PC-3 (cell line): ENCODE measurements at regions of chr4 and their contacts with region 1.

Region 1: DNA sequence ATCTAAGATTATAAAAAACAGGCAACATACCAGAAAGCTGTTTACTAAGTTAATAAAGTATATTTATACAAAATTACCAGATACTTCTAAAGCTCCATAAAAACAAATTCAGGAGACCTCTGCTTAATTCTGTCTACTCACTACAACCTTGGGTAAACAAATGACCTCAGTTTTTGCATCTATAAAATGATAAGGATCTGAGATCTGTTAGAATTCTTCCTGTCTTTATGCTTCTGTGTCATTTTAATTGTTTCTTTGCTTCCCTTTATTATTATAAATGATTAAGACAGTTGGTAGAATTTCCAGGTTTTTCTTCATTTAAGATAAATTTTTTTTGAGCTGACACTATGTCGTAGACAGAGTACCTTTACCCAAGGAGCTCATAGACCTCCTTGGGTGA is 76.0 kb downstream of the ANK2 start:
- DNase-seq: peak; percentile 10
- ATAC-seq: peak; percentile 78
- H3K4me3 ChIP-seq: no peak overlapping the region
- H3K27ac ChIP-seq: no peak overlapping the region
- H3K4me1 ChIP-seq: 0 out of 2 replicates have a peak, but pooled peaks cover 4% of the 10 kb centered on the region
- H3K27me3 ChIP-seq: 0 out of 2 replicates have a peak, but pooled peaks cover 2% of the 10 kb centered on the region
- CTCF ChIP-seq: no peak

Region 2: DNA sequence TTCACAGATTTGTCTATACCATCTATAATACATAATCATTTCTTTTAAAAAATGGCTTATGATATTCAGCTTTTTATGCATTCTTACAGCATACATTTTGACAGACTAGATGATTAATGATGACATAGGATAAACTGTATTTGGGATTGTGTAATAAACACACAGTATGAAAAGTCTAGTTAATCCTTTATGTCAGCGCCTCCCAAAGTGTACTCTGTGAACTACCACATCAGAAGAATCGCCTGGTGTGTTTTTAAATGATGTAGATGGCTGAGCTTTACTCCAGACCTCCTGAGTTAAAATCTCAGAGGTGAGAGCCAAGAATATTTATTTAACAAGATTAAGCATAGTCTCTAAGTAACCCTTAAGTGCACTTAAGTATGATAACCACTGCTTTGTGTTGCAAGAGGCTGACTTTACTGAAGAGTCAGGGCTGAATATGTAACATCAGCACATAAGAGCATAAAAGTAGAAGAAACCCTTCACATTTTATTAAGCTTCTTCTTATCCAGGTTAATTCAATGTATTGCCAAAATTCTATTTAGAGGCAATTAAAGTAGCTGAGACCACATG is 28.2 kb after region 1 on chr4:
- CTCF ChIA-PET with region 1: no interaction called
- POLR2A ChIA-PET with region 1: no interaction called
- intact Hi-C with region 1: no loop called
- DNase-seq: peak; percentile 51
- ATAC-seq: peak; percentile 40
- H3K4me3 ChIP-seq: no peak overlapping the region
- H3K27ac ChIP-seq: no peak overlapping the region
- H3K4me1 ChIP-seq: no peaks in the 10 kb centered on the region
- H3K27me3 ChIP-seq: no peaks in the 10 kb centered on the region
- CTCF ChIP-seq: peak; percentile 57

Region 3: GRCh38 chr4:113584407-113585150 is 459.2 kb after region 1 on chr4:
- CTCF ChIA-PET with region 1: interaction called, 11 read pairs
- POLR2A ChIA-PET with region 1: no interaction called
- intact Hi-C with region 1: no loop called
- DNase-seq: no peak
- ATAC-seq: no peak
- H3K4me3 ChIP-seq: no peak overlapping the region
- H3K27ac ChIP-seq: no peak overlapping the region
- H3K4me1 ChIP-seq: no peaks in the 10 kb centered on the region
- H3K27me3 ChIP-seq: no peaks in the 10 kb centered on the region
- CTCF ChIP-seq: no peak